Activated CD8-positive, alpha-beta T cell treated with anti-CD3 and anti-CD28 coated beads, Interleukin-2, amount 10 ng/mL, durations not matched to agents 7 days and 5 days (primary cell): ENCODE measurements at regions of chr14 and their contacts with region 1.

Region 1: GRCh38 chr14:50532502-50533240 is at the start of gene MAP4K5:
- DNase-seq: peak; percentile 90
- ATAC-seq: peak; percentile 96
- H3K4me3 Mint-ChIP-seq: peak within 1 kb of the TSS; percentile 91
- H3K27ac Mint-ChIP-seq: peak within 1 kb of the TSS; percentile 84
- H3K4me1 Mint-ChIP-seq: peaks cover 47% of the 10 kb centered on the region
- H3K27me3 Mint-ChIP-seq: peaks cover 3% of the 10 kb centered on the region
- total RNA-seq, gene MAP4K5: 28.3 to 28.6 TPM

Region 2: DNA sequence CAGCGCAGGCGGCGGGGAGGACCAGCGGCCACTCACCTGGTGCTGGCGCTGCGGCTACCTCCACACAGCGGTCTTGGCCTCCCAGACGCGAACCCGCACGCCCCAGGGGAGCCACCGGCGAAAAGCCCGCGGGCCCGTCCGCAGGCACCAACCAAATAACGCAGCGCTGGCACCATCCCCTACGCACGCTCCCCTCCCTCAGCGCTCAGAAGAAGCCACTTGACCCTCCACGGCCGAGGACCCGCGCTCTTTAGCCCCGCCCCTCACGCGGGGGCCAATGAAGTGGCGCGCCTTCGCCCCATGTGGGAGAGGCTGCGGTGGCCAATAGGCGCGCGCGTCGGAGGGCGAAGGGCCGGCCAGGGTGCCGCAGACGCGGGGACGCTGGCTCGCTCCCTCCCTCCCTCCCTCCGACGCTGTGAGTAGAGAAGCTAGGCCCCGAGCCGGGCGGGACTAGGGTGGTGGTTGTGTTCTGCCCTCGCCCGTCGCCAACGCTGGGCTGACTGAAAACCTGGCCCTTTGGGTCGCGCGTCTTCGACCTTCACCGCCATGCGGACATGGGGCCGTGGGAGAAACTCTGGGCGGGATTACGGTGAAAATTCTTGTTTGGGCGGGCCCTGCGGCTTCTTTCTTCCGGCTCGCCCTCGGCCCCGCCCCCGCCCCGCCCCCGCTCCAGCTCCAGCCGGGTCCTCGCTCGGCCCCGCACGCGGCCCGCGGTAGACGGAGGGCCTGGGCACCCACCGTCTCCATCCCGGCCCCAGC is 220.5 kb before region 1 on chr14 and contains the starts of genes DMAC2L and L2HGDH:
- CTCF ChIA-PET with region 1: interaction called, 13 read pairs
- POLR2A ChIA-PET with region 1: no interaction called
- DNase-seq: peak; percentile 92
- ATAC-seq: peak; percentile 94
- H3K4me3 Mint-ChIP-seq: peak within 1 kb of the TSS; percentile 95
- H3K27ac Mint-ChIP-seq: peak within 1 kb of the TSS; percentile 98
- H3K4me1 Mint-ChIP-seq: peaks cover 45% of the 10 kb centered on the region
- H3K27me3 Mint-ChIP-seq: no peaks in the 10 kb centered on the region
- total RNA-seq, gene DMAC2L: 14.9 to 18.6 TPM
- total RNA-seq, gene L2HGDH: 12.7 to 13.6 TPM

Region 3: GRCh38 chr14:50520947-50521815 is 11.5 kb before region 1 on chr14:
- CTCF ChIA-PET with region 1: interaction called, 12 read pairs
- POLR2A ChIA-PET with region 1: no interaction called
- DNase-seq: peak; percentile 47
- ATAC-seq: peak; percentile 75
- H3K4me3 Mint-ChIP-seq: peak overlapping the region; percentile 58
- H3K27ac Mint-ChIP-seq: peak overlapping the region; percentile 78
- H3K4me1 Mint-ChIP-seq: peaks cover 42% of the 10 kb centered on the region
- H3K27me3 Mint-ChIP-seq: no peaks in the 10 kb centered on the region